Activated B cell treated with CpG ODN at 0.5 μM for 24 hours (primary cell): ENCODE measurements at regions of chr16 and their contacts with region 1.

Region 1: GRCh38 chr16:3134564-3135417 is at the start of gene ZNF213:
- DNase-seq: peak; percentile 81
- ATAC-seq: peak; percentile 99
- H3K4me3 Mint-ChIP-seq: peak within 1 kb of the TSS; percentile 97
- H3K27ac Mint-ChIP-seq: peak within 1 kb of the TSS; percentile 97
- H3K4me1 Mint-ChIP-seq: peaks cover 24% of the 10 kb centered on the region
- H3K27me3 Mint-ChIP-seq: no peaks in the 10 kb centered on the region
- CTCF ChIP-seq: no peak
- total RNA-seq, gene ZNF213: 5.6 and 5.7 TPM in 2 replicates

Region 2: GRCh38 chr16:3074860-3075522 is 59.8 kb before region 1 on chr16:
- CTCF ChIA-PET with region 1: interaction called, 5 read pairs
- POLR2A ChIA-PET with region 1: interaction called, 11 read pairs
- intact Hi-C with region 1: no loop called
- DNase-seq: peak; percentile 41
- ATAC-seq: peak; percentile 94
- H3K4me3 Mint-ChIP-seq: peak overlapping the region; percentile 61
- H3K27ac Mint-ChIP-seq: peak overlapping the region; percentile 88
- H3K4me1 Mint-ChIP-seq: peaks cover 61% of the 10 kb centered on the region
- H3K27me3 Mint-ChIP-seq: no peaks in the 10 kb centered on the region
- CTCF ChIP-seq: no peak

Region 3: GRCh38 chr16:3099732-3100499 is 34.9 kb before region 1 on chr16:
- CTCF ChIA-PET with region 1: interaction called, 56 read pairs
- POLR2A ChIA-PET with region 1: interaction called, 34 read pairs
- intact Hi-C with region 1: loop called (anchors 1 kb)
- DNase-seq: peak; percentile 76
- ATAC-seq: peak; percentile 85
- H3K4me3 Mint-ChIP-seq: peak overlapping the region; percentile 79
- H3K27ac Mint-ChIP-seq: peak overlapping the region; percentile 32
- H3K4me1 Mint-ChIP-seq: peaks cover 37% of the 10 kb centered on the region
- H3K27me3 Mint-ChIP-seq: no peaks in the 10 kb centered on the region
- CTCF ChIP-seq: no peak

Region 4: GRCh38 chr16:3106205-3106928 is 28.4 kb before region 1 on chr16:
- CTCF ChIA-PET with region 1: interaction called, 7 read pairs
- POLR2A ChIA-PET with region 1: interaction called, 17 read pairs
- intact Hi-C with region 1: loop called (anchors 1 kb)
- DNase-seq: peak; percentile 84
- ATAC-seq: peak; percentile 96
- H3K4me3 Mint-ChIP-seq: peak overlapping the region; percentile 79
- H3K27ac Mint-ChIP-seq: peak overlapping the region; percentile 73
- H3K4me1 Mint-ChIP-seq: peaks cover 27% of the 10 kb centered on the region
- H3K27me3 Mint-ChIP-seq: peaks cover 1% of the 10 kb centered on the region
- CTCF ChIP-seq: no peak

Region 5: DNA sequence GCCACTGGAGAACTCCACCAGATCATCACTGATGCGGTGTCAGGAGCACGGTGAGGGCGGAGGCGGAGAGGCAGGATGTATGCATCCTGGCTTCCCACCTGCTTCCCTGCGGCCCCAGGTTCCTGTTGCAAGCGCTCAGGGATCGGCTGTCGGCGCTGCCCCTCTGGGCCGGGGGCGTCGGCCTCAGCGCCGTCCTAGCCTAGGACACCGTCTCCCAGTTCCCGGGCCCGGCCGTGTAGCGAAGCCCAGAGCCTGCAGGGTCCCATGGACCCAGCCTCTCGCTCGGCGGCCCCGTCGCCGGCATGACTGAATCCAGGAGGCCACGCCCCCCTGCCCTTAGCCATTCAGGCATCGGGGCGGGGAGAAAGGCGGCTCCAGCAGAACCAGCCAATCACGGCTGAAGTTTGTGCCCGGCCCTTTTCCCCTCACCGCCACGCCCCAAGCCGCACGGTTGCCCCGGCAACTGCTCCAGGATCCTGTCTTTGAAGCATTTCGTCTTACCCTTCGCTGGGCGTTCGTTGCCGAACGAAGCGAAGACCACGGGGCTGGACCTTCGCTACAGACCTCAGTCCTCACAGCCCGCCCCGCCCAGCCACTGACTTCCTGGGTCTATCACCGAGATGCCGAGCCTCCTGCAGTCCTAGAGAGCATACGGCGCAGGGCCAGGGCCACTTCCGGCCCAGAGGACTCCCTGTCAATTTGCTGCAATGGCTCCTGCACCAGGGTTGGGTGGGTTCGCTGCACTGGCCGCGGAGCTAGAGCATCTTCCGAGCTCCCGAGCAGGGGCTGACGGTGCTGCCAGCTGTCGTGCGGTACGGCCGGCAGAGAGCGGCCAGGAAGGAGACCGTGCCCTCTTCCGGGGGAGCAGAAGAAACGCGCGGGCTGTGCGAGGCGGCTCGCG is 10.6 kb before region 1 on chr16:
- CTCF ChIA-PET with region 1: interaction called, 3 read pairs
- POLR2A ChIA-PET with region 1: interaction called, 16 read pairs
- intact Hi-C with region 1: loop called (anchors 1 kb)
- DNase-seq: peak; percentile 93
- ATAC-seq: peak; percentile 90
- H3K4me3 Mint-ChIP-seq: peak overlapping the region; percentile 98
- H3K27ac Mint-ChIP-seq: peak overlapping the region; percentile 96
- H3K4me1 Mint-ChIP-seq: peaks cover 35% of the 10 kb centered on the region
- H3K27me3 Mint-ChIP-seq: no peaks in the 10 kb centered on the region
- CTCF ChIP-seq: no peak

Region 6: GRCh38 chr16:3158471-3159314 is 23.9 kb after region 1 on chr16:
- CTCF ChIA-PET with region 1: interaction called, 8 read pairs
- POLR2A ChIA-PET with region 1: interaction called, 33 read pairs
- intact Hi-C with region 1: loop called (anchors 1 kb)
- DNase-seq: peak; percentile 77
- ATAC-seq: peak; percentile 90
- H3K4me3 Mint-ChIP-seq: peak overlapping the region; percentile 91
- H3K27ac Mint-ChIP-seq: peak overlapping the region; percentile 90
- H3K4me1 Mint-ChIP-seq: peaks cover 23% of the 10 kb centered on the region
- H3K27me3 Mint-ChIP-seq: peaks cover 3% of the 10 kb centered on the region
- CTCF ChIP-seq: no peak

Region 7: GRCh38 chr16:3311496-3311895 is 176.7 kb after region 1 on chr16:
- CTCF ChIA-PET with region 1: no interaction called
- POLR2A ChIA-PET with region 1: no interaction called
- intact Hi-C with region 1: no loop called
- DNase-seq: no peak
- ATAC-seq: no peak
- H3K4me3 Mint-ChIP-seq: no peak overlapping the region
- H3K27ac Mint-ChIP-seq: no peak overlapping the region
- H3K4me1 Mint-ChIP-seq: peaks cover 10% of the 10 kb centered on the region
- H3K27me3 Mint-ChIP-seq: no peaks in the 10 kb centered on the region
- CTCF ChIP-seq: no peak